ENCODE measurements at regions of chr17 and their contacts with region 1.

Region 1: GRCh38 chr17:47315451-47316266 is 8.1 kb upstream of the EFCAB13 start:
- DNase-seq: peak; percentile 81
- H3K4me3 ChIP-seq: no peak overlapping the region
- H3K27ac ChIP-seq: no peak overlapping the region
- H3K4me1 ChIP-seq: peaks cover 14% of the 10 kb centered on the region
- H3K27me3 ChIP-seq: no peaks in the 10 kb centered on the region
- CTCF ChIP-seq: peak; percentile 78 to 80

Region 2: GRCh38 chr17:47162013-47162622 is 153.5 kb before region 1 on chr17:
- CTCF ChIA-PET with region 1: no interaction called
- dilution Hi-C with region 1: no loop called
- in situ Hi-C with region 1: loop called in 1 of 2 experiments (anchors 10 kb)
- intact Hi-C with region 1: loop called (anchors 10 kb)
- DNase-seq: no peak
- H3K4me3 ChIP-seq: no peak overlapping the region
- H3K27ac ChIP-seq: no peak overlapping the region
- H3K4me1 ChIP-seq: no peaks in the 10 kb centered on the region
- H3K27me3 ChIP-seq: no peaks in the 10 kb centered on the region
- CTCF ChIP-seq: no peak

Region 3: GRCh38 chr17:47229535-47230443 is 85.9 kb before region 1 on chr17:
- CTCF ChIA-PET with region 1: interaction called, 10 read pairs
- dilution Hi-C with region 1: loop called (anchors 10 kb)
- in situ Hi-C with region 1: loop called (anchors 5 kb)
- intact Hi-C with region 1: loop called (anchors 1 kb)
- DNase-seq: peak; percentile 89
- H3K4me3 ChIP-seq: peak overlapping the region; percentile 2 to 19 (median 13)
- H3K27ac ChIP-seq: no peak overlapping the region
- H3K4me1 ChIP-seq: peaks cover 21% of the 10 kb centered on the region
- H3K27me3 ChIP-seq: no peaks in the 10 kb centered on the region
- CTCF ChIP-seq: peak; percentile 100

Region 4: DNA sequence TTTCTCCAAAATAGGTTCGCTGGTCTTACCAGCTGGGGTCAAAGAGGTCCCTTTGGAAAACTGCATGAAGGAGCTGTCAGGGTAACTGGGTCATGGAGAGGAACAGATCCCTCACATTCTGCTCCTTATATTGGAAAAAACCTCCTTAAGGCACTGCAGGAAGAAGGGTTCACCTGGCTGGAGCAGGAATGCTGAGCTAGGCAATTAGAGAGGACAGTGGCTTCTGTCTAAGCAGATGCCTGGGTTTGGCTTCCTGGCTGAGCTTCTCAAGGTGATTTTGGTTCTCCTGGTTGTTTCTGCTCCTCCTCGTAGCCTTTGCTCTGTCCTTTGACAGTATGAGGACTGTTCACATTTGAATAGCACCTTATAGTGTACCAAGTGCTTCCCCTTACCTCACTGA is 42.4 kb before region 1 on chr17:
- CTCF ChIA-PET with region 1: interaction called, 11 read pairs
- dilution Hi-C with region 1: no loop called
- in situ Hi-C with region 1: no loop called
- intact Hi-C with region 1: loop called (anchors 2 kb)
- DNase-seq: no peak
- H3K4me3 ChIP-seq: no peak overlapping the region
- H3K27ac ChIP-seq: no peak overlapping the region
- H3K4me1 ChIP-seq: peaks cover 21% of the 10 kb centered on the region
- H3K27me3 ChIP-seq: no peaks in the 10 kb centered on the region
- CTCF ChIP-seq: no peak

Region 5: DNA sequence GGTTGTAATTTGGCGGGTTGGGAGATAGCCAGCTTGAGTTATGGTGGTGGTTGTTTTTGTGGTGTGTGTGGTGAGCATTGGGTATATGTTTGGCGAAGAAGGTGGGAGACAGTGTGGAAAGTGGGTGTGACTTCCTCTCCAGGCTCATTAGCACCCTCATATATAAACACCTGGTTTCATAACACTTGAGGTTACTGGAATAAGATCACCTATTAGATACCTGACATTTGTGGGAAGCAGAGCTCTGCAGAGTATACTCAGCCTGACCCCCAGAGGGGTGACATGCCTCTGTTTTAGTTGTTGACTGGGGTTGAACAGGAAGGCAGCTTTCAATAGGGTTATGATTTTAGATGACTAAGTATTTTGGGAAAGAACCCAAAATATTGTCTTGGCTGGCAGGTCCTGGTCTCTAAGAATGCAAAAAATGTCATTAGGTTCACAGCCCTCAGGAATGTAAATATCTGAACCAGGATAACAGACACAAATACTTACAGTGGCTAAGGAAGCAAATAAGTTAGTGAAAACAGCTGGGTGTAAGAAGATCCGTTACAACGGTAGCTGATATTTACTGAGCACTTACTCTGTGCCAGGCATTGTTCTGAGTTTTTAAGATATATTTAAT is 10.2 kb before region 1 on chr17:
- CTCF ChIA-PET with region 1: no interaction called
- dilution Hi-C with region 1: no loop called
- in situ Hi-C with region 1: no loop called
- intact Hi-C with region 1: no loop called
- DNase-seq: peak; percentile 90
- H3K4me3 ChIP-seq: no peak overlapping the region
- H3K27ac ChIP-seq: no peak overlapping the region
- H3K4me1 ChIP-seq: peaks cover 15% of the 10 kb centered on the region
- H3K27me3 ChIP-seq: peaks cover 2% of the 10 kb centered on the region
- CTCF ChIP-seq: no peak

Region 6: GRCh38 chr17:47615766-47616424 is 300.2 kb after region 1 on chr17:
- CTCF ChIA-PET with region 1: no interaction called
- dilution Hi-C with region 1: no loop called
- in situ Hi-C with region 1: no loop called
- intact Hi-C with region 1: loop called (anchors 5 kb)
- DNase-seq: peak; percentile 24
- H3K4me3 ChIP-seq: no peak overlapping the region
- H3K27ac ChIP-seq: no peak overlapping the region
- H3K4me1 ChIP-seq: peaks cover 14% of the 10 kb centered on the region
- H3K27me3 ChIP-seq: no peaks in the 10 kb centered on the region
- CTCF ChIP-seq: peak; percentile 56

Measured in mammary epithelial cell (primary cell).